CD4-positive, alpha-beta T cell (primary cell): ENCODE measurements at regions of chr4 and their contacts with region 1.

Region 1: GRCh38 chr4:113394730-113395530 is 345.5 kb downstream of the ANK2 start:
- DNase-seq: peak in 13 of 14 experiments; percentile 1 to 85 (median 27)
- ATAC-seq: peak; percentile 83
- H3K4me3 ChIP-seq: no peak overlapping the region
- H3K4me3 Mint-ChIP-seq: no peak overlapping the region
- H3K27ac ChIP-seq: no peak overlapping the region
- H3K27ac Mint-ChIP-seq: no peak overlapping the region
- H3K4me1 ChIP-seq: no peaks in the 10 kb centered on the region
- H3K4me1 Mint-ChIP-seq: no peaks in the 10 kb centered on the region
- H3K27me3 ChIP-seq: no peaks in the 10 kb centered on the region
- H3K27me3 Mint-ChIP-seq: no peaks in the 10 kb centered on the region
- CTCF ChIP-seq: peak; percentile 86

Region 2: GRCh38 chr4:113547487-113548042 is 152.6 kb after region 1 on chr4:
- CTCF ChIA-PET with region 1: interaction called, 4 read pairs
- POLR2A ChIA-PET with region 1: no interaction called
- intact Hi-C with region 1: loop called in 1 of 2 experiments (anchors 10 kb)
- DNase-seq: peak; percentile 75 to 96 (median 86)
- ATAC-seq: peak; percentile 99
- H3K4me3 ChIP-seq: no peak overlapping the region
- H3K4me3 Mint-ChIP-seq: no peak overlapping the region
- H3K27ac ChIP-seq: no peak overlapping the region
- H3K27ac Mint-ChIP-seq: peak overlapping the region; percentile 68
- H3K4me1 ChIP-seq: peaks cover 5% of the 10 kb centered on the region
- H3K4me1 Mint-ChIP-seq: peaks cover 11% of the 10 kb centered on the region
- H3K27me3 ChIP-seq: no peaks in the 10 kb centered on the region
- H3K27me3 Mint-ChIP-seq: no peaks in the 10 kb centered on the region
- CTCF ChIP-seq: peak; percentile 95

Region 3: DNA sequence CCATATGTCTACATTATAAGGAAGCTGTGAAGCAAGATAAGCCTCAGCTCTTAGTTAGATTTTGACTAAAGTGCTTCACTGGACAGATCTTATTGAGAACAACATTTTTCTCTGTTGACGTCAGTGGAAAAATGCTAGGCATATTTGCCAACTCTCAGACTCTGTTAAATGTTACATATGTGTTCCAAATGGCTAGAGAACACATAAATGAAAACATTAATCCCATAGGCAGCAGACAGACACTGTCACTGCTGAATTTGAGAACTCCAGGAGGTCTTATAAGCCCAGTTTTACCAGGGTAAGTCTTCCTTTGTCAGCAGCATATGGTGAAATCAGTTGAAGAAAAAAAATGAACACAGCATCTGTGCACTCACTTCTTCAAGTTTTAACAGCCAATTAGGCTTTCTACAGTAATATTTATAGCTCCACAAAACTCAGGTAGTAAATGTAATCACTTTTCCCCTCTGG is 179.7 kb after region 1 on chr4:
- CTCF ChIA-PET with region 1: no interaction called
- POLR2A ChIA-PET with region 1: no interaction called
- intact Hi-C with region 1: no loop called
- DNase-seq: no peak
- ATAC-seq: no peak
- H3K4me3 ChIP-seq: no peak overlapping the region
- H3K4me3 Mint-ChIP-seq: no peak overlapping the region
- H3K27ac ChIP-seq: no peak overlapping the region
- H3K27ac Mint-ChIP-seq: no peak overlapping the region
- H3K4me1 ChIP-seq: peaks cover 3% of the 10 kb centered on the region
- H3K4me1 Mint-ChIP-seq: peaks cover 72% of the 10 kb centered on the region
- H3K27me3 ChIP-seq: no peaks in the 10 kb centered on the region
- H3K27me3 Mint-ChIP-seq: no peaks in the 10 kb centered on the region
- CTCF ChIP-seq: no peak

Region 4: DNA sequence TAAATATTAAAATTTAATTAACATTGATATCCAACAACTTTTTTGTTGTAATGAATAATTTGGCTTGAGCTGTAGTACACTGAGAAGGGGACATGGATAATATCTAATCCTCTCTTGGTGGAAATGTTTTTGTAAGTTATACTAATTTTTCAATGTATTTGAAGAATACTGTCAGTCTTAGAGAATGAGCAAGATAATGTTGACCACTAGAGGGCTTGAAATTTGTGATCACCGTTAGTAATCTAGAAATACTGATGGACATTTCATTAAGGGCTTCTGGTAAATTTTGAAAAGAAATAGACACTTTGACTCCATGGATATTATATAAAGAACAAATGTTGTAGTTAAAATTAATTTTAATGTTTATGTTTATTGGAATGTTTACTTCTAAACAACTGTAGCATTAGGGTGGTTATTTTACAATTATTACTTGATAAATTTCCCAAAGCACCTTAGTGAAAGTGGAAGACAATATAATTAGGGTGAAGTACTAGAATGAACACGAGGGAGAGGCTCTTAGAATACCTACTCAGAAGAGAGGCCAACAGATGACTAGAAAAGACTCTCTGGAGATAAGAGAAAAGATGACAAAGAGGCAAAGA is 386.6 kb after region 1 on chr4:
- CTCF ChIA-PET with region 1: no interaction called
- POLR2A ChIA-PET with region 1: no interaction called
- intact Hi-C with region 1: loop called in 1 of 2 experiments (anchors 10 kb)
- DNase-seq: peak in 3 of 14 experiments; percentile 45 to 64 (median 64)
- ATAC-seq: peak; percentile 21
- H3K4me3 ChIP-seq: no peak overlapping the region
- H3K4me3 Mint-ChIP-seq: no peak overlapping the region
- H3K27ac ChIP-seq: no peak overlapping the region
- H3K27ac Mint-ChIP-seq: no peak overlapping the region
- H3K4me1 ChIP-seq: no peaks in the 10 kb centered on the region
- H3K4me1 Mint-ChIP-seq: peaks cover 15% of the 10 kb centered on the region
- H3K27me3 ChIP-seq: no peaks in the 10 kb centered on the region
- H3K27me3 Mint-ChIP-seq: no peaks in the 10 kb centered on the region
- CTCF ChIP-seq: peak; percentile 80

Region 5: GRCh38 chr4:114077610-114078009 is 682.7 kb after region 1 on chr4:
- CTCF ChIA-PET with region 1: no interaction called
- POLR2A ChIA-PET with region 1: no interaction called
- intact Hi-C with region 1: loop called in 1 of 2 experiments (anchors 5 kb)
- DNase-seq: no peak
- ATAC-seq: no peak
- H3K4me3 ChIP-seq: no peak overlapping the region
- H3K4me3 Mint-ChIP-seq: no peak overlapping the region
- H3K27ac ChIP-seq: no peak overlapping the region
- H3K27ac Mint-ChIP-seq: no peak overlapping the region
- H3K4me1 ChIP-seq: no peaks in the 10 kb centered on the region
- H3K4me1 Mint-ChIP-seq: no peaks in the 10 kb centered on the region
- H3K27me3 ChIP-seq: no peaks in the 10 kb centered on the region
- H3K27me3 Mint-ChIP-seq: no peaks in the 10 kb centered on the region
- CTCF ChIP-seq: no peak

Region 6: DNA sequence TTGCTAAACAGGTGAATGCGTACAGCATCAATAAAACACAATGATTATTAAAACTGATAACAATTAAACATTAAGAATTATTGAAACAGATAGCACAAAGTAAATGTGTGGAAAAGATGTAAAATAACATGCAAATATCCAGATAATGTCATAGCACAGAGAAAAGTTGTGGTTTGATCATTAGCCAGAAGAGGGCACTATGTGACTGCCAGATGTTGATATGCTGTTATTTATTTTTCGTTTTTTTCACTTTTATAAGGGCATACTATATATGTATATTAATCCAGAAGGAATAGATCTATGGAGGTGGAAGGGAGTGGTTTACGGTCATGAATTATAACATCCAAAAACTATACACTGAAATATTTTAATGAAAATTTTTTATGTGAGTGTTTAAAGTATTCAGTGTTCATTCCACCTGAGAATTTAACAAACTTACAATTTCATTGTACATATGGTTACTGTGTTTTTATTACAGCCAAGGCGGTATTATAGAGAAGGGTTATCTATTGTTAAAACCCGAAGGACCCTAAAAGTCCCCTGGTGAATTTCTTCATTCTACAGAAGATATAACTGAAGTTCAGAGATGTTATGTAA is 991.8 kb after region 1 on chr4:
- CTCF ChIA-PET with region 1: interaction called, 7 read pairs
- POLR2A ChIA-PET with region 1: no interaction called
- intact Hi-C with region 1: loop called in 1 of 2 experiments (anchors 2 kb)
- DNase-seq: peak in 3 of 14 experiments; percentile 30 to 36 (median 34)
- ATAC-seq: no peak
- H3K4me3 ChIP-seq: no peak overlapping the region
- H3K4me3 Mint-ChIP-seq: no peak overlapping the region
- H3K27ac ChIP-seq: no peak overlapping the region
- H3K27ac Mint-ChIP-seq: no peak overlapping the region
- H3K4me1 ChIP-seq: no peaks in the 10 kb centered on the region
- H3K4me1 Mint-ChIP-seq: no peaks in the 10 kb centered on the region
- H3K27me3 ChIP-seq: no peaks in the 10 kb centered on the region
- H3K27me3 Mint-ChIP-seq: peaks cover 30% of the 10 kb centered on the region
- CTCF ChIP-seq: peak; percentile 52

Region 7: DNA sequence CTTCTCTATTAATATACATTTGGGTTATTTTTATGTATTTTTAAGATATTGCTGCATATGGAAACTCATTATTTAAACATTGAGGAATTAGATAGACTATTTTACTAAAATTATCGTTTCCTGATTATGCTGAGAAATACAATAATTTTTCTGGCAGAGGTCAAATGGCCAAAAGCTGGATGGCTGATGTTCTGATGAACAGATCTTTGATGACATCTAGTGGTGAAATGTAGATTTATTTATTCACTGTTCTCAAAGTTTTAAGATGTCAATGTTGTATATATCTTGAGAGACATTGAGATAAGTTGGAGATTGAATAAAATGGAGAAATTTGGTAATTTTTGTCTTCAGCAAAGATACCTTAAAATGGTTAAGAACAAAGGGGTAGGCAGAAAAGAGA is 1299.8 kb after region 1 on chr4:
- CTCF ChIA-PET with region 1: no interaction called
- POLR2A ChIA-PET with region 1: no interaction called
- intact Hi-C with region 1: loop called (anchors 1 kb)
- DNase-seq: peak in 3 of 14 experiments; percentile 25 to 40 (median 29)
- ATAC-seq: no peak
- H3K4me3 ChIP-seq: no peak overlapping the region
- H3K4me3 Mint-ChIP-seq: no peak overlapping the region
- H3K27ac ChIP-seq: no peak overlapping the region
- H3K27ac Mint-ChIP-seq: no peak overlapping the region
- H3K4me1 ChIP-seq: no peaks in the 10 kb centered on the region
- H3K4me1 Mint-ChIP-seq: no peaks in the 10 kb centered on the region
- H3K27me3 ChIP-seq: no peaks in the 10 kb centered on the region
- H3K27me3 Mint-ChIP-seq: peaks cover 7% of the 10 kb centered on the region
- CTCF ChIP-seq: peak; percentile 73